Naive thymus-derived CD4-positive, alpha-beta T cell (primary cell): ENCODE measurements at regions of chr2 and their contacts with region 1.

Region 1: GRCh38 chr2:161160226-161161069 is at the start of gene TANK:
- DNase-seq: peak; percentile 72 to 90 (median 88)
- ATAC-seq: peak; percentile 96
- H3K4me3 ChIP-seq: peak within 1 kb of the TSS; percentile 75
- H3K4me3 Mint-ChIP-seq: peak within 1 kb of the TSS; percentile 95 to 100 (median 98)
- H3K27ac ChIP-seq: peak within 1 kb of the TSS; percentile 84
- H3K27ac Mint-ChIP-seq: peak within 1 kb of the TSS; percentile 95 to 99 (median 98)
- H3K4me1 ChIP-seq: peaks cover 19 to 39% of the 10 kb centered on the region in 2 donors
- H3K4me1 Mint-ChIP-seq: peaks cover 21 to 64% (median 60%) of the 10 kb centered on the region in 7 donors
- H3K27me3 ChIP-seq: no peaks in the 10 kb centered on the region
- H3K27me3 Mint-ChIP-seq: no peaks in the 10 kb centered on the region
- total RNA-seq, gene TANK: 57.4 to 142 (median 62.4) TPM

Region 2: DNA sequence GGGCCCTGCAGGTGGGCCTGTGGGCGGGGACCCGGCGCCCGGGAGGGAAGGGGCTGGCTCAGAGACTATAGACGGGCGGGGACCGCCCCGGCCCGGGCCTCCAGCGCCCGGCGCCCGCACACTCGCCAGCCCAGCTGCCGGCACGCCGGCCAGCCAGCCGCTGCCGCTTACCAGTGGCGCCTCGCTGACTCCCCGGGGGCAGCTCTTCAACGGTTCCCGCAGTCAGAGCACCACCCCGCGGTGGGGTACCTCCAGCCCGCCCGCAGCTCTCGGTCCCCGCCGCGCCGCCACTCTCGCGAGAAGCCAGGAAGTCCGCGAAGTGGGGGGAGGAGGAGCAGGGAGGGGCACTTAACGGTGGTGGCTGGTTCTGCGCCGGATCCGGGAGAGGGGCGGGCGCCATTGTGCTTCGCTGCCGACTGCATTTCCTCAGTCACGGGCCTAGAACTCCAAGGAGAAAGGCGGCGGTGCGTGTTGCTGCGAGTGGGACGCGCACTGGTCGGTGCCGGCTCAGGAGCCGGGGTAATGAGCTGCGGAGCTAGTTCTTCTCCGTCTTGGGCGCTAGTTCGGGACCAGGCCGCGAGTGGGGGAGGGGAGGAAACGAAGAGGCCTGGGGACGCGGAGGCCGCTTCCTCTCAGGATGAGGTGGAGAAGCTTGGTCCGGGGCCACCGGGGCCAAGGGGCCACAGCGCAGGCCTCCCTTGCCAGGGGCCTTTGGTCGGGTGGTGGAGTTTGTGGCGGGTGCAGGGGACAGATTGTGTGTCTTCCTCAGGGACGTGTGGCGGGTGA is 1448.1 kb before region 1 on chr2 and contains the start of gene MARCHF7:
- CTCF ChIA-PET with region 1: no interaction called
- POLR2A ChIA-PET with region 1: no interaction called
- intact Hi-C with region 1: loop called in 1 of 2 experiments (anchors 1 kb)
- DNase-seq: peak; percentile 95 to 99 (median 98)
- ATAC-seq: peak; percentile 96
- H3K4me3 ChIP-seq: peak within 1 kb of the TSS; percentile 98
- H3K4me3 Mint-ChIP-seq: peak within 1 kb of the TSS; percentile 95 to 100 (median 100)
- H3K27ac ChIP-seq: peak within 1 kb of the TSS; percentile 90
- H3K27ac Mint-ChIP-seq: peak within 1 kb of the TSS; percentile 97 to 100 (median 99)
- H3K4me1 ChIP-seq: peaks cover 43 to 44% of the 10 kb centered on the region in 2 donors
- H3K4me1 Mint-ChIP-seq: peaks cover 36 to 63% (median 50%) of the 10 kb centered on the region in 7 donors
- H3K27me3 ChIP-seq: no peaks in the 10 kb centered on the region
- H3K27me3 Mint-ChIP-seq: no peaks in the 10 kb centered on the region
- total RNA-seq, gene MARCHF7: 64.3 to 120 (median 80.2) TPM

Region 3: DNA sequence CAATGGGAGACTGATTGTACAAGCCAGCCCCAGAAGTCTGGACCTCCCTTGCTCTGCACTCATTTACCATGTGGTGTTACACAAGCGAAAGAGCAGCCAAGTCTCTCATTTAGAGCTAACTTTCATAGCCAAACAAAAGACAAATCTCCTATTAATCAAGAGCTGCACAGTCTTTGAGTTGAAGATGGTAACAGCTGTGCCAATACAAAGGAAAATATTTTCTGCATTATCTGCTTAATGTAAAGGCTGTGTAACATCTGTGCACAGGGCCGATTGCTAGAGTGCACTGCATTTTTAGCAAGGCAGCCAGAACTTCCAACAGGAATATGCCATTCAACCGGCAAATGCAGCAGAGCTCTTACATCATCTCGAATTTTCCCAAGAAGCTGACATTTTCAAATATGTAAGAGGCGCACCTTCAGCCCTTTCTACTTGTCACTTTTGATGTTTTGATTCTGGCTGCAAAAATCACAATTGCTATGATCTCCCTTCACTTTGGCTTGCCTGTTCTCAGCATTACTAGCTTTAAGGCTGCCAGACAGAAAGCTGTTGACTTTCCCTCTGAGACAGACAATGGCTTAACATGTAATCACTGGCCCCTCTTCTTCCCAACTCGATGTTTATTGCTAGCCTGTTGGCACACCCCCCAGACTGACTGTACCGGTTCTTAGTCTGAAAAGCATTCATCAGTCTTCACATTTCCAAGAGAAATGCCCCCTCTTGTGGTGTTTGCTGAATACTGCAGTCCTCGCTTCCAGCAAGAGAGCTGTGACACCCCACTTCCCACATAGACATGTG is 97.1 kb before region 1 on chr2:
- CTCF ChIA-PET with region 1: interaction called, 3 read pairs
- POLR2A ChIA-PET with region 1: no interaction called
- intact Hi-C with region 1: loop called in 1 of 2 experiments (anchors 2 kb)
- DNase-seq: peak; percentile 17 to 70 (median 62)
- ATAC-seq: peak; percentile 94
- H3K4me3 ChIP-seq: no peak overlapping the region
- H3K4me3 Mint-ChIP-seq: no peak overlapping the region
- H3K27ac ChIP-seq: no peak overlapping the region
- H3K27ac Mint-ChIP-seq: peak overlapping the region in 3 of 9 donors; percentile 18 to 65 (median 53)
- H3K4me1 ChIP-seq: no peaks in the 10 kb centered on the region
- H3K4me1 Mint-ChIP-seq: peaks cover 2 to 12% (median 5%) of the 10 kb centered on the region in 7 donors
- H3K27me3 ChIP-seq: no peaks in the 10 kb centered on the region
- H3K27me3 Mint-ChIP-seq: peaks cover 0 to 5% (median 0%) of the 10 kb centered on the region in 5 donors

Region 4: GRCh38 chr2:161136696-161137324 is 23.6 kb before region 1 on chr2:
- CTCF ChIA-PET with region 1: no interaction called
- POLR2A ChIA-PET with region 1: interaction called, 12 read pairs
- intact Hi-C with region 1: loop called (anchors 1 kb)
- DNase-seq: peak in 6 of 9 donors; percentile 31 to 76 (median 48)
- ATAC-seq: peak; percentile 94
- H3K4me3 ChIP-seq: peak overlapping the region; percentile 67
- H3K4me3 Mint-ChIP-seq: peak overlapping the region; percentile 68 to 98 (median 91)
- H3K27ac ChIP-seq: peak overlapping the region; percentile 83
- H3K27ac Mint-ChIP-seq: peak overlapping the region; percentile 89 to 99 (median 95)
- H3K4me1 ChIP-seq: peaks cover 21 to 27% of the 10 kb centered on the region in 2 donors
- H3K4me1 Mint-ChIP-seq: peaks cover 23 to 71% (median 58%) of the 10 kb centered on the region in 7 donors
- H3K27me3 ChIP-seq: no peaks in the 10 kb centered on the region
- H3K27me3 Mint-ChIP-seq: no peaks in the 10 kb centered on the region

Region 5: GRCh38 chr2:161308178-161308955 is 147.9 kb after region 1 on chr2 and contains the start of gene PSMD14:
- CTCF ChIA-PET with region 1: no interaction called
- POLR2A ChIA-PET with region 1: no interaction called
- intact Hi-C with region 1: loop called (anchors 1 kb)
- DNase-seq: peak; percentile 67 to 88 (median 85)
- ATAC-seq: peak; percentile 95
- H3K4me3 ChIP-seq: peak within 1 kb of the TSS; percentile 94
- H3K4me3 Mint-ChIP-seq: peak within 1 kb of the TSS; percentile 89 to 98 (median 95)
- H3K27ac ChIP-seq: peak within 1 kb of the TSS; percentile 77
- H3K27ac Mint-ChIP-seq: peak within 1 kb of the TSS; percentile 92 to 97 (median 95)
- H3K4me1 ChIP-seq: peaks cover 3 to 19% of the 10 kb centered on the region in 2 donors
- H3K4me1 Mint-ChIP-seq: peaks cover 24 to 65% (median 42%) of the 10 kb centered on the region in 7 donors
- H3K27me3 ChIP-seq: no peaks in the 10 kb centered on the region
- H3K27me3 Mint-ChIP-seq: peaks cover 0 to 9% (median 3%) of the 10 kb centered on the region in 5 donors
- total RNA-seq, gene PSMD14: 13.2 to 69.5 (median 23.2) TPM

Region 6: DNA sequence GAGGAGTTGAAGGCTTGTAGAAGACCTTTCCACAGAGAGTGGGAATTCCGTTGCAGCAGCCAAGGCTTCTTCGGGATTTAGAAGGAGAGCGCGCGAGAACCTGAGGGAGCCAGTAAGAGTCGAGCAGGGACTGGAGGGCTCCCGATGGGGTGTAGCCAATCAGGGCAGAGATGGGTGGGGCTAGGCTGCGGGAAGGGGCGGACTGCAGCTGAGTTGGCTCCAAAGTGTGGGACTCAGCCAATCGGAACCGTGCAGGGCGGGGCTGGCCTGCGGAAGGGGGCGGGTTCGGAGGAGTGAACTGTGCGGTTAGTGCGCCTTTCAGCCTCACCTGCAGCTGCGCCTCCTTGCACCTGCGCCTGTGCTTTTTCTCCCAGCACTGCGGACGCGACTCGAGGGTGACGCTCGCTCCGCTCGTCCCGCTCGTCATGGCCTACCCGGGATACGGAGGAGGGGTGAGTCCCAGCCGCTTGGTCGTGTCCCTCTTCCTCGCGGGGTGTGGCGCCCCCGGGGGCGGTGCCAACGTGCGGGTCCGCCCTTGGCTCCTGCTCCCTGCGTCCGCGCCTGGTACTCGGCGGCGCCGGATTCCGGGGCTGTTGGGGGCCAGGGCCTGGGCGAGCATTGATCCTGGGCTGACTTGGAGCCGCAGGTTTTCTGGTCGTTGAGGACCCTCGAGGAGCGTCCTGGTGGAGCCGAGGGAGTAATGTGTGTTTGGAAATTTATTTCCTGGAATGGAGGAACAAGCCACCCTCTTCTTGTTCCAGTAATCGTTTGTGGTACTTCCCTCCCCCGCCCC is 1183.6 kb after region 1 on chr2 and contains the start of gene GCA:
- CTCF ChIA-PET with region 1: no interaction called
- POLR2A ChIA-PET with region 1: no interaction called
- intact Hi-C with region 1: loop called in 1 of 2 experiments (anchors 1 kb)
- DNase-seq: peak; percentile 96 to 99 (median 98)
- ATAC-seq: peak; percentile 99
- H3K4me3 ChIP-seq: peak within 1 kb of the TSS; percentile 87
- H3K4me3 Mint-ChIP-seq: peak within 1 kb of the TSS; percentile 78 to 96 (median 91)
- H3K27ac ChIP-seq: peak within 1 kb of the TSS; percentile 53
- H3K27ac Mint-ChIP-seq: peak within 1 kb of the TSS; percentile 70 to 92 (median 81)
- H3K4me1 ChIP-seq: peaks cover 4 to 5% of the 10 kb centered on the region in 2 donors
- H3K4me1 Mint-ChIP-seq: peaks cover 0 to 21% (median 19%) of the 10 kb centered on the region in 7 donors
- H3K27me3 ChIP-seq: no peaks in the 10 kb centered on the region
- H3K27me3 Mint-ChIP-seq: peaks cover 0 to 9% (median 0%) of the 10 kb centered on the region in 5 donors
- total RNA-seq, gene GCA: 10.9 to 56.3 (median 13.4) TPM